Activated CD8-positive, alpha-beta memory T cell treated with anti-CD3 and anti-CD28 coated beads, Interleukin-2, amount 10 ng/mL, durations not matched to agents 7 days and 5 days (primary cell): ENCODE measurements at regions of chr16 and their contacts with region 1.

Region 1: GRCh38 chr16:85659805-85660495 is 28.8 kb downstream of the GINS2 start:
- DNase-seq: peak; percentile 75
- ATAC-seq: peak; percentile 72
- H3K4me3 Mint-ChIP-seq: no peak overlapping the region
- H3K27ac Mint-ChIP-seq: no peak overlapping the region
- H3K4me1 Mint-ChIP-seq: no peaks in the 10 kb centered on the region
- H3K27me3 Mint-ChIP-seq: no peaks in the 10 kb centered on the region

Region 2: DNA sequence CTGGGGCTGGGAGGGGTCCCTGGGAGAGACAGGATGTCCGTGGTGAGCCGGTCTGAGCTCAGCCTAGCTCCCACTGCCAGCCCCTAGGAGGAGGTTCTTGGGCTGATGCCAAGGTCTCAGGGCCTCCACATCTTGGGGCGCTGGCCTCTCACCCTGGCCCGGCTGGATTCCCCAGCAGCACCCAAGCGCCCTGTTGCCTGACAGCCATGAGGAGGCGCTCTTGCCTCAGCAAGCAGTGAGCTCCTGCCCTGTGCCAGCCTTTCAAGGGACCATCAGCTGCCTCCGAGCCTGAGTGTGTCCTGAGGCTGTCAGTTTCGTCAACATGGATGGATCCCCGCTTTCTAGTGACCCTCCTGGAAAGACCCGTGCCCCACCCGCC is 312.7 kb before region 1 on chr16:
- CTCF ChIA-PET with region 1: no interaction called
- DNase-seq: no peak
- ATAC-seq: no peak
- H3K4me3 Mint-ChIP-seq: no peak overlapping the region
- H3K27ac Mint-ChIP-seq: no peak overlapping the region
- H3K4me1 Mint-ChIP-seq: no peaks in the 10 kb centered on the region
- H3K27me3 Mint-ChIP-seq: no peaks in the 10 kb centered on the region

Region 3: DNA sequence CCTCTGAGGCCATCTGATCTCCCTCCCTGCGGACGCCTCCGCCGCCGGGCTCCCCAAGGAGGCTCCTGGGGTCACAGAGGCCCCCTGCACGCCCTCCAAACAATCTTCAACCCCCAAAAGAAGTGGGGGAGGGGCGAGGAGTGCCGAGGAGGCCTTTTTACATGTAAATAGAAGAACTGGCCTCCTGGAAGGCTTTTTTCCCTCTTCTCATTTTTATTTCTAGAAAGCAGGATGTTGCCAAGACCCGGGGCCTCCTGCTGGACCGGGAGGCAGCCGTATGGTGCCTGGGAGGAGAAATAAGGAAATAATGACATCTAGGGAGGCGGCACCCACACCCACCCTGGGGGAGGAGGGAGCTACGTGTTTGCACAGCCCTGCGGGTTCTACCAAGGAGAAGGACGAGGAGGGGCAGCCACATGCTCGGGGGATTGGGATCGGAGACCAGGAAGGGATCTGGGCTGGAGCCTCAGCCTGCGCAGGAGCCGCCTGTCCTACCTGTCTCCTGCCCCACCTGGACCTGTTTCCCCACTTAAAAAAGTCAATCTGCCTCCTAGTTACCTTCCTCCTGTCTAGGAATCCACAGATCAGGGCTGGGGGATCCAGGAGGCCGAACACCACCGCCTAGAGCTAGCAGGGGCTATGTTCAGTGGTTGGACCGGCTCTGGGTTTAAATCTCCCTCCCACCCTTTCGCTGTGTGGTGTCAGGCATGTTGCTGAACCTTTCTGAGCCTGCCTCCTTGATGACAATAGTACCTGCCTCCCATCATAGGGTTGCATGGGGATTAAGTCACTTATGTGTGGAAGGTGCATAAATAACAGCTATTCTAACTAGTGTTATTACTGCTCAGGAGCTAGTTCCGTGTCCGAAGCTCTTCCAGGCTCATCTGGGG is 222.5 kb before region 1 on chr16:
- CTCF ChIA-PET with region 1: no interaction called
- DNase-seq: no peak
- ATAC-seq: no peak
- H3K4me3 Mint-ChIP-seq: no peak overlapping the region
- H3K27ac Mint-ChIP-seq: no peak overlapping the region
- H3K4me1 Mint-ChIP-seq: no peaks in the 10 kb centered on the region
- H3K27me3 Mint-ChIP-seq: no peaks in the 10 kb centered on the region

Region 4: DNA sequence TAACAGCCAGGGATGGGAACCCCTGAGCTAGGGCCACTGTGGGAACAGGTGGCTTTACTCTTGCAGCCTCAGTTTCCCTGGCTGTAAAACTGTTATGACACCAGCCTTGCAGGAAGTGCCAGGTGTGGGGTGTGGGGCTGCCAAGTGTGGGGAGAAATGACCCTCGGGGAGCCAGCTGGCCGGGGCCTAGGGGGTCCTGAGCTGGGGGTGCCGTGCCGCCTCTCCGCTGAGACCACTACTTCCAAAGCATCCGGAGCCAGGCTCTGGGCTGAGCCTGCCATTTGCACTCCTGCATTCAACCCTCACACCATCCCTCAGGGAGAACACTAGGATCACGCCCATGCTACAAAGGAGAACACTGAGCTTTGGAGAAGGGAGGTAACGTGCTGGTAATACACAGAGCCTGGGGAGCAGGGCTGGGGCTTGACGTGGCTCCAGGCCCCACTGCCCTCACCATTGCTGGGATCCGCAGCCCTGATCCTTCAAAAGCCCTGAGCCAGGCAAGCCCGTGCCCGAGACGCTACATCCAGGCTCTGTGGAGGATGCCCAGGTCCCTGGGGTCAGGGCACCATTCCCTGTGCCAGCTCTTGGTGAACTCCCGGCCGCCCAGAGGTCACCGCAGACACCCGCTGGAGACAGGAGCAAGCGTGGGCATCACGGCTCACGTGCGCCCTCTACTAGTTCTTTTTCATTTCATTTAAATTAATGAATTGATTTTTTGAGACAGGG is 57.6 kb after region 1 on chr16:
- CTCF ChIA-PET with region 1: interaction called, 45 read pairs
- DNase-seq: peak; percentile 67
- ATAC-seq: peak; percentile 42
- H3K4me3 Mint-ChIP-seq: no peak overlapping the region
- H3K27ac Mint-ChIP-seq: no peak overlapping the region
- H3K4me1 Mint-ChIP-seq: peaks cover 6% of the 10 kb centered on the region
- H3K27me3 Mint-ChIP-seq: peaks cover 11% of the 10 kb centered on the region

Region 5: DNA sequence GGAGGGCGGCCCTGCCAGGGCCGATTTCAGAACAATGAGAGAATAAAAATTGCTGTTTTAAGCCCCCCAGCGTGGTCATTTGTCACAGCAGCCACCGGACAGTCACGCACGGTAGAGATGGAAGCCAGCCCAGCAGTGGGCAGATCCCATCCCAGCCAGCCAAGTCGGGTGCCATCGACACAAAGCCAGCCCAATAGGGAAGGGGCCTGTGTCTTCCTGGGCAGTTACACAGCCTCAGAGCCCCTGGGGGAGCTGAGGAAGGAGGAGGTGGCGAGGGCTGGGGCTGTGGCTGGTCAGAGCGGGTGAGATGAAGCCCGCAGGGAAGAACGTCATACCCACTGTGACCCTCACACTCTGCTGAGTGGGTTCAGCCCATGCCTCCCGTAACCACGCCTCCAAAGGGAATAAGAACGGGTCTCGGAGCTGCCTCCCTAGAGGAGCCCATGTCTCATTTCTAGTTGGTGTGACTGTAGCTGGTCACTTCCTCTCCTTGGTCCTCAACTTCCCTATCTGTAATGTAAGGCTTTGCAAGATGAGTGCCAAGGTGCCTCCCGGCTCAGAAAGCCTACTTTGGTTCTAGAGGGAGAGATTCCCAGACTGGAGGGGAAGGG is 70.0 kb after region 1 on chr16:
- CTCF ChIA-PET with region 1: no interaction called
- DNase-seq: no peak
- ATAC-seq: no peak
- H3K4me3 Mint-ChIP-seq: no peak overlapping the region
- H3K27ac Mint-ChIP-seq: no peak overlapping the region
- H3K4me1 Mint-ChIP-seq: peaks cover 2% of the 10 kb centered on the region
- H3K27me3 Mint-ChIP-seq: no peaks in the 10 kb centered on the region

Region 6: DNA sequence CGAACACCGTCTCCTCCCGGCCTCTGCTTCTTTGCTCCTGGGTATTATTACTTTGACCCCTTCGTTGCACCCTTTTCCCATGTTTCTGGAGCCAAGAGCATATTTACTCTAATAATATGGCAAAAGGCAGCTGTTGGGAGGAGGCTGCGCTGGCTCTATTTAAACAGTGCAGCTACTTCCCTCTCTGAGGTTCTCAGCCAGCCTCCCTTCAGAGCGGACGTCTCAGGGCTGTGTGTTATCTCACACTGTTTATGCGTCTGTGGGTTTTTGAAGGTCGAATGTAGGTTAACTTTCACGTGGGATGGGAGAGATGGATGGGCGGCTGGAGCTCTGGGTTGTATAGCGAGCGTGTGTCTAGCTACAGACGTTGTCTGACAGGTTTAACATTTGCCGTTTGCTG is 184.8 kb after region 1 on chr16:
- CTCF ChIA-PET with region 1: no interaction called
- DNase-seq: no peak
- ATAC-seq: no peak
- H3K4me3 Mint-ChIP-seq: no peak overlapping the region
- H3K27ac Mint-ChIP-seq: no peak overlapping the region
- H3K4me1 Mint-ChIP-seq: no peaks in the 10 kb centered on the region
- H3K27me3 Mint-ChIP-seq: peaks cover 24% of the 10 kb centered on the region